ENCODE measurements at regions of chr10 and their contacts with region 1.

Region 1: GRCh38 chr10:71378336-71379117 is 18.2 kb upstream of the CDH23 start:
- DNase-seq: no peak
- H3K4me3 ChIP-seq: no peak overlapping the region
- H3K27ac ChIP-seq: no peak overlapping the region
- H3K4me1 ChIP-seq: peaks cover 0 to 3% of the 10 kb centered on the region in 2 donors
- H3K27me3 ChIP-seq: no peaks in the 10 kb centered on the region
- CTCF ChIP-seq: no peak

Region 2: DNA sequence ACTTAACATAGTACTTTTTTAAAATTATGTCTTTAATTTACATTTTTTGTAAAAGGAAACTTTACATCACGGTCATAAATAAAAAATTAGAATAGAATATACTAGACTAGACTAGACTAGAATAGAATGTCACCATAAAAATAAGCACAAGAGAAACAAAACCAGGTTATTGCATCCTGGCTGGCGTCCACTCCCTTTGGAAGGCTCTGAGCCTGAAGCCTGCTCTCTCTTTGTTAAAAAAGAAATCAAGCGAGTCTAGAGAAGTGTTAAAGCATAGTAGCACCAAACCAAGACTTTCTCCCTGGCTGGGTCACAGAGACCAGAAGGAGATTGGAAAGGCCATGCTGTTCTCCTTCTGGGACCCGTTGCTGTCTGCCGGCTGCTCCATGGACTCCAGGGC is 236.4 kb after region 1 on chr10:
- intact Hi-C with region 1: loop called (anchors 5 kb)
- DNase-seq: no peak
- H3K4me3 ChIP-seq: no peak overlapping the region
- H3K27ac ChIP-seq: no peak overlapping the region
- H3K4me1 ChIP-seq: peaks cover 8 to 16% of the 10 kb centered on the region in 2 donors
- H3K27me3 ChIP-seq: no peaks in the 10 kb centered on the region
- CTCF ChIP-seq: no peak

Region 3: GRCh38 chr10:71771821-71772617 is 393.5 kb after region 1 on chr10:
- intact Hi-C with region 1: loop called (anchors 2 kb)
- DNase-seq: peak; percentile 64 to 93
- H3K4me3 ChIP-seq: peak overlapping the region; percentile 69 to 85
- H3K27ac ChIP-seq: peak overlapping the region; percentile 94 to 98
- H3K4me1 ChIP-seq: peaks cover 40 to 54% of the 10 kb centered on the region in 2 donors
- H3K27me3 ChIP-seq: no peaks in the 10 kb centered on the region
- CTCF ChIP-seq: no peak

Measured in ascending aorta (tissue), 2 donors.